ENCODE measurements at regions of chr16 and their contacts with region 1.

Region 1: GRCh38 chr16:68800257-68800875 is 43.0 kb upstream of the TANGO6 start:
- DNase-seq: peak; percentile 83
- H3K4me3 ChIP-seq: no peak overlapping the region
- H3K27ac ChIP-seq: peak overlapping the region; percentile 21 to 53
- H3K4me1 ChIP-seq: peaks cover 14% of the 10 kb centered on the region
- H3K27me3 ChIP-seq: no peaks in the 10 kb centered on the region
- CTCF ChIP-seq: peak; percentile 53 to 90 (median 80)
- POLR2A ChIP-seq: no peak

Region 2: DNA sequence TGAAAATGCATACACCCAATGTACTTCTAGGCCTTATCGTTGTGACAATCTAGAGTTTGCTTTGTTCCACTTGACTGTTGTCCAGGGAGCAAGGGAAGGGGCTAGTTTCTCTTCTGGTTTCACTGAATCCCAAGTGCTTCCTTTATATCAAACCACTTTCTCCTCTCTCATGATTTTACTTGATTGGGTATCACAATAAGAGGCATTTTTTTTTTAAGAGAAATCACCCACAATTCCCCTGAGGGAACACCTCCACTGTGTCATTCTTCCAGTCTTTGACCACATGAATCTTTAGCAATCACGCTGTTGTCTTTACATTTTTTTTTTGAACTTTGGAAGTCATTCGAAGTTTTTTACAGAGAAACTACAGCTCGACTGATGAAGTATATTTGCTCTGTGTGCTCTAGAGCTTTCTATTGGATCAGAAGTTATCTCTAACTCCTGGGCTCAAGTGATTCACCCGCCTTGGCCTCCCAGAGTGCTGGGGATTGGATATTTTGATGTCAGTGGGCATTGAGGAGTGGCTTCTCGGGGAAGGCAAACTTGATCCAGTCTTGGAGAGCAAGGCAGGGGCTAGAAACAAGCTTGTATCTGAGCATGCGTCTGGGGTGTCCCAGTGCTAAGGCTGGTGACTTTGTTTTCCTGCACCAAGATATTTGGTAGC is 60.3 kb before region 1 on chr16:
- intact Hi-C with region 1: loop called (anchors 2 kb)
- DNase-seq: no peak
- H3K4me3 ChIP-seq: no peak overlapping the region
- H3K27ac ChIP-seq: peak overlapping the region; percentile 91 to 93
- H3K4me1 ChIP-seq: peaks cover 21% of the 10 kb centered on the region
- H3K27me3 ChIP-seq: no peaks in the 10 kb centered on the region
- CTCF ChIP-seq: no peak
- POLR2A ChIP-seq: no peak

Region 3: GRCh38 chr16:68910051-68910450 is 109.7 kb after region 1 on chr16:
- intact Hi-C with region 1: no loop called
- DNase-seq: no peak
- H3K4me3 ChIP-seq: no peak overlapping the region
- H3K27ac ChIP-seq: no peak overlapping the region
- H3K4me1 ChIP-seq: peaks cover 3% of the 10 kb centered on the region
- H3K27me3 ChIP-seq: no peaks in the 10 kb centered on the region
- CTCF ChIP-seq: no peak
- POLR2A ChIP-seq: no peak

Measured in prostate gland (tissue), 2 donors.